Transverse colon (tissue), 4 donors: ENCODE measurements at regions of chr11 and their contacts with region 1.

Region 1: DNA sequence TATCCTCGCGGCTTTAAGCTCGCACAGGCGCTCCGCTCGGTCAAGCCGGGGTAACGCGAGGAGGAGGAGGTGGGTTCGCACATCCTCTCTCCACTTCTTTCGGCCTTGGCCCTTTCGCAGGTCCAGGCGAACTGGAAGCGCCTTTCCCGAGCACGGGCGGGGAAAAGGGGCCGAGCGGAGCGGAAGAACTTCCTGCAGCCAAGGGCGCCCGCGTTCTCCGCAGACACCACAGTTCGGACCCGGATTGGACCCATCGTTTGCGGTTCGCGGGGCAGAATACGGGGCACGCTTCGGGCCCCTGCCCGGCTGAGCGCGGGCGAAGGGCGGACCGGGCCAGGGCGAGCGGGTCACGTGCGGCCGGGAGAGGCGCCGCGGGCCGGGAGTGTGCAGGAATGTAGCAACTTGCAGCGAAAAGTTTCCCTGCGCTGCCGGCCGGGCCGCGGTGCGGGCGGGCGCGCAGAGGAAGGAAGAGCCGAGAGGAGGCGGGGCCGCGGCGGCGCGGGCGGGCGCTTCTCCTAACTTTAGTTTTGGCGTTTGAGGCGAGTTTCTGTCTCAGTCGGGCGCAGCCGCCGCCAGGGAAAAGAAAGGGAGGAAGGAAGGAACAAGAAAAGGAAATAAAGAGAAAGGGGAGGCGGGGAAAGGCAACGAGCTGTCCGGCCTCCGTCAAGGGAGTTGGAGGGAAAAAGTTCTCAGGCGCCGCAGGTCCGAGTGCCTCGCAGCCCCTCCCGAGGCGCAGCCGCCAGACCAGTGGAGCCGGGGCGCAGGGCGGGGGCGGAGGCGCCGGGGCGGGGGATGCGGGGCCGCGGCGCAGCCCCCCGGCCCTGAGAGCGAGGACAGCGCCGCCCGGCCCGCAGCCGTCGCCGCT is at the start of gene YAP1:
- DNase-seq: peak; percentile 89
- H3K4me3 ChIP-seq: peak within 1 kb of the TSS; percentile 85 to 95 (median 90)
- H3K27ac ChIP-seq: peak within 1 kb of the TSS; percentile 95 to 99 (median 96)
- H3K4me1 ChIP-seq: peaks cover 8 to 35% (median 15%) of the 10 kb centered on the region in 4 donors
- H3K27me3 ChIP-seq: no peaks in the 10 kb centered on the region
- CTCF ChIP-seq: peak in 1 of 5 experiments; percentile 19
- EP300 ChIP-seq: no peak
- POLR2A ChIP-seq: peak; percentile 63
- total RNA-seq, gene YAP1: 90.5 to 163 (median 105) TPM

Region 2: GRCh38 chr11:102007567-102008437 is 102.3 kb before region 1 on chr11:
- in situ Hi-C with region 1: no loop called
- intact Hi-C with region 1: no loop called
- DNase-seq: peak; percentile 60
- H3K4me3 ChIP-seq: no peak overlapping the region
- H3K27ac ChIP-seq: peak overlapping the region; percentile 73 to 83 (median 78)
- H3K4me1 ChIP-seq: peaks cover 3 to 19% (median 14%) of the 10 kb centered on the region in 4 donors
- H3K27me3 ChIP-seq: no peaks in the 10 kb centered on the region
- CTCF ChIP-seq: peak; percentile 51 to 69 (median 62)
- EP300 ChIP-seq: no peak
- POLR2A ChIP-seq: no peak

Region 3: DNA sequence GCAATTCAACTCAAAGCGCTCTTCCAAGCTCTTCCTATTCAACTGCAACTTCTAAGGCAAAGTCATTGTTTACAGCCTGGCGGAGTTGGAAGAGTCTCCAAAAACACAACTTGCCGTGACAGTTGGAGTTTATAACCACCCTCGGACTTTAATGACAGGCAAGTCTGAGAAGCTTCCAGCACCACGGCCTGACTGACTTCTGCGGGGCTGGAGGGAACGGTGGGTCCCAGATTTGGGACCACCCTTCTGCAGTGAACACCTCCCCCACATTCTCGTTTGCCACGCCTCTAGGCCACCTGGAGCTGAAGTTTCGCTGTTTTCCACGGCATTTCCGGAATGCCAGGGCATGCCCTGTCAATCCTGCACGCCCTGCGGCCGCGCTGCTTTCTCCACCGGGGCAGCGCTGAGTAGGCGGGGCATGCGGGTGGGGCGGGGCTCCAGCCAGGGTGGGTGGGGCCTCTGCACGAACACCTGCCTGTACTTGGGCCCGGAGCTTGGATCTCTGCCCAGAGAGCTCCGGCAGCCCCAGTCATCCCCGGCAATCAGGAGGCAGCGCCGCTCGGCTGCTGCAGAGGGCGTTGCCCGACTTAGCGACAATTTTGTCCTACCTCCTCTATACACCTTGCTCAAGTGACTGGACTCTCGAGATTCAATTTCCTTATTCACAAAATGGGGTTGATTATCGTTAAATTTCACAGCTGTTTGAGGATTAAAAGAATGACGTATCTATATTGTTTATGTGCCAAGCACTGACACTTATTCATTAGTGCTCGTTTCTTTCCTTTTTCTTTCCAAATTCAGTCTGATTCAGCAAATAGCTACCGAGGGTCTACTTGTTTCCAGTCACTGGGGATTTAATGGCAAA is 158.4 kb after region 1 on chr11:
- in situ Hi-C with region 1: loop called in 2 of 4 experiments (anchors 10 to 25 kb)
- intact Hi-C with region 1: loop called (anchors 10 kb)
- DNase-seq: peak; percentile 95
- H3K4me3 ChIP-seq: peak overlapping the region; percentile 13 to 54 (median 38)
- H3K27ac ChIP-seq: peak overlapping the region; percentile 81 to 88 (median 85)
- H3K4me1 ChIP-seq: peaks cover 8 to 43% (median 15%) of the 10 kb centered on the region in 4 donors
- H3K27me3 ChIP-seq: no peaks in the 10 kb centered on the region
- CTCF ChIP-seq: peak in 4 of 5 experiments; percentile 29 to 40 (median 34)
- EP300 ChIP-seq: no peak
- POLR2A ChIP-seq: peak; percentile 50

Region 4: DNA sequence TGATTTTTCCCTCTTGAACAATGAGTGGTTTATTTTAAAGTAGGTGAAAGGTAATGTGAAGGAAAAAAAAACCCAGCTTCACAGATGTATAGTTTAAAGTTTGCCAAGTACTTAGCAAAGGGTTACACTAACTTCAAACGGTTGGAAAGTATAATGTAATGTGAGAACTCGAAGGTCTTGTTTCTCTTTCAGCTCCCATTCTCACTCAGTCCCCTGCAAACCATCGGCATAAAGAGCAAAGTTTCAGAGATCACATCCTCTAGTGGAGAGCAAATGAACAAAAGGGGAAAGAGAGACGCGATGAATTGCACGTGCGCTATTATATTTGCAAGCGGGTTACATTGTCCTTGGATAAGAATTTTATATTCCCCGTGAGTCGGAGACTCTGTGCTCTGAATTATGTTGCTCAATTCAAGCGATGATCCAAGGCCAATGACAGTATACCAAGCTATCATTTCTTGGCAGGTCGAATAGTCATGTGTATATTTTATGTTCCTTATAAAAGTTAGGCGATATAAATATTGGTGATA is 169.6 kb after region 1 on chr11:
- in situ Hi-C with region 1: loop called in 2 of 4 experiments (anchors 10 to 25 kb)
- intact Hi-C with region 1: loop called (anchors 10 kb)
- DNase-seq: peak; percentile 39
- H3K4me3 ChIP-seq: peak overlapping the region in 1 of 4 donors; percentile 31
- H3K27ac ChIP-seq: peak overlapping the region; percentile 64 to 74 (median 72)
- H3K4me1 ChIP-seq: peaks cover 0 to 24% (median 13%) of the 10 kb centered on the region in 4 donors
- H3K27me3 ChIP-seq: no peaks in the 10 kb centered on the region
- CTCF ChIP-seq: peak in 2 of 5 experiments; percentile 34 to 62
- EP300 ChIP-seq: no peak
- POLR2A ChIP-seq: no peak